Activated T-helper 1 cell treated with anti-CD3 and anti-CD28 coated beads, Interleukin-12 subunit alpha, Interleukin-12 subunit beta, Interleukin-2, Interleukin-4 antibody, amounts not matched to agents 30 ng/mL and 10 ng/mL and 1 ng/mL, durations not matched to agents 14 hours and 24 hours and 36 hours (primary cell): ENCODE measurements at regions of chr3 and their contacts with region 1.

Region 1: DNA sequence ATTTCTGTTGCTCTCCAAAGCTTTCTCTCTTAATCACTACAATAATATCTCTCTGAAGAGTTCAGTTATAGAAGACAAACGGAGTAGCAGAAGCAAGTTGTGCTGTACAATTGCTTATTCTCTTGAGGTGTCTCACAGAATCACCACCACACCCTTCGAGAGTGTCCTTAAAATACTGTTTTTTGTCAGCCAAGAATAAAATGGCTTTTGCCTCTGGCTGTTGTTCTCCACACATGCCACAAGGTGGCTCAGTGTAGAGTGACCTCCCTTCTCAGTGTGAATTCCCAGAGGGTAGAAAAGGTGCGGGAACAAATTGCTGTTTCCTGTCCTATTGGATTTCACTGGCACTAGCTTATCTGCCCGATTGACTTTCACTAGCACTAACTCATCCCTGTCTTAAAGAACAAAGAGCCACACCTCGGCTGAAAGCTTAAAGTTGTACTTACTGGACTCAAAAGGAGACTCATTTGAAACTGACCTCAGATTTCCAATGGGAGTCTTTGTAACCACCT is 134.2 kb upstream of the SATB1 start:
- DNase-seq: peak; percentile 27
- H3K4me3 Mint-ChIP-seq: peak overlapping the region; percentile 64
- H3K27ac Mint-ChIP-seq: peak overlapping the region; percentile 90
- H3K4me1 Mint-ChIP-seq: peaks cover 66% of the 10 kb centered on the region
- H3K27me3 Mint-ChIP-seq: no peaks in the 10 kb centered on the region

Region 2: DNA sequence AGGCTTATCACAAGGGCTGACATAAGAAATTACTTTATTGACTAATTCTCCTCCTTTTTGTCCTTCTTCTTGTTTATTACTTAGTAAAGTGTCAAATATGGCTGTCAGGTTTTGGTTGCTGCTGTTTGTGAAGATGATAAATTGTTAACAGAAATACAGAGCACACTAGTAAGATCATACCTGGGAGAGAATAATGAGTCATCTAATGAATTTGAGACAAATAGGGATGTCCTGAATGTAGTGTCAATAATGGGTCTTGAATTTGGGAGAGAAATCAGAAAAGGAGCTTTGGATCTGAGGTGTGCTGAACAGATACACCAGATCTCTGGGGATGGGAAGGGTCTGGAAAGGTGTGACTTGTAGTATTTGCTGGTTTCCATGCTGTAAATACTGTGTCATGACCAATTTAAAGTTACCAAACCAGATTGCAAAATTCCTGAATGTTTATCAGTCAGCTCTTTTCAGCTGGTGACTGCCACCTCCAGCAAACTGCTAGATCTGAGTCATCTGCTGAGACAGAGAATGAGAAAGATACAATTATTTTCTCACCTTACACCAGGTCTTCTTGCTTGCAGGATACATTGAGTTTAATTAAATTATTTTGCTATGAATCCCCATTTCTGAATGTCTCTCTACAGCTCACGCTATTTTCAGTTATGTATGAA is 57.6 kb before region 1 on chr3:
- intact Hi-C with region 1: loop called (anchors 2 kb)
- DNase-seq: no peak
- H3K4me3 Mint-ChIP-seq: no peak overlapping the region
- H3K27ac Mint-ChIP-seq: peak overlapping the region; percentile 62
- H3K4me1 Mint-ChIP-seq: peaks cover 47% of the 10 kb centered on the region
- H3K27me3 Mint-ChIP-seq: no peaks in the 10 kb centered on the region

Region 3: DNA sequence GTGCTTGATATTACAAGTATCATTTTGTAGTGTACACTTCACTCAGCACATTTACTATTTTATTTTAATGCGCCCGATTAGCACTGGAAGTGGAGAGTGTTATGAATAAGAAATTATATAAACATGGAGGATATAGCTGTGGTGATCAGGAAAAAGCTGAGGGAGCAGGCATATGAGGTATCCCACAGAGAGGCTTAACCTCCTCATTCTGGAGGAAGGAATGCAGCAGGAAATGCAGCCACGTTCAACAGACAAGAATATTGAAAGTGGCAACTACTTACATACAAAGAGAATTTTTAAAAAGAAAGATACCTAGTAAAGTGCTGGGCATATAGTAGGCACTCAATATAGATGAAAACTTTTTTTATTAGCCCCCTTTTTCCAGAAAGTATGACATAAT is 31.7 kb after region 1 on chr3:
- intact Hi-C with region 1: no loop called
- DNase-seq: no peak
- H3K4me3 Mint-ChIP-seq: no peak overlapping the region
- H3K27ac Mint-ChIP-seq: no peak overlapping the region
- H3K4me1 Mint-ChIP-seq: no peaks in the 10 kb centered on the region
- H3K27me3 Mint-ChIP-seq: no peaks in the 10 kb centered on the region

Region 4: GRCh38 chr3:18679238-18679637 is 119.9 kb after region 1 on chr3:
- intact Hi-C with region 1: loop called (anchors 1 kb)
- DNase-seq: peak; percentile 62
- H3K4me3 Mint-ChIP-seq: peak overlapping the region; percentile 19
- H3K27ac Mint-ChIP-seq: peak overlapping the region; percentile 77
- H3K4me1 Mint-ChIP-seq: peaks cover 89% of the 10 kb centered on the region
- H3K27me3 Mint-ChIP-seq: no peaks in the 10 kb centered on the region

Region 5: GRCh38 chr3:18758047-18758704 is 198.8 kb after region 1 on chr3:
- intact Hi-C with region 1: loop called (anchors 1 kb)
- DNase-seq: peak; percentile 50
- H3K4me3 Mint-ChIP-seq: no peak overlapping the region
- H3K27ac Mint-ChIP-seq: peak overlapping the region; percentile 73
- H3K4me1 Mint-ChIP-seq: peaks cover 50% of the 10 kb centered on the region
- H3K27me3 Mint-ChIP-seq: no peaks in the 10 kb centered on the region

Region 6: GRCh38 chr3:19931180-19931692 is 1371.8 kb after region 1 on chr3:
- intact Hi-C with region 1: loop called (anchors 5 kb)
- DNase-seq: peak; percentile 39
- H3K4me3 Mint-ChIP-seq: peak overlapping the region; percentile 50
- H3K27ac Mint-ChIP-seq: peak overlapping the region; percentile 95
- H3K4me1 Mint-ChIP-seq: peaks cover 38% of the 10 kb centered on the region
- H3K27me3 Mint-ChIP-seq: peaks cover 4% of the 10 kb centered on the region